Activated naive CD4-positive, alpha-beta T cell treated with anti-CD3 and anti-CD28 coated beads for 36 hours (primary cell): ENCODE measurements at regions of chr10 and their contacts with region 1.

Region 1: GRCh38 chr10:99395750-99396445 is 34.5 kb downstream of the GOT1 start:
- DNase-seq: no peak
- H3K4me3 Mint-ChIP-seq: no peak overlapping the region
- H3K27ac Mint-ChIP-seq: no peak overlapping the region
- H3K4me1 Mint-ChIP-seq: peaks cover 3% of the 10 kb centered on the region
- H3K27me3 Mint-ChIP-seq: no peaks in the 10 kb centered on the region

Region 2: DNA sequence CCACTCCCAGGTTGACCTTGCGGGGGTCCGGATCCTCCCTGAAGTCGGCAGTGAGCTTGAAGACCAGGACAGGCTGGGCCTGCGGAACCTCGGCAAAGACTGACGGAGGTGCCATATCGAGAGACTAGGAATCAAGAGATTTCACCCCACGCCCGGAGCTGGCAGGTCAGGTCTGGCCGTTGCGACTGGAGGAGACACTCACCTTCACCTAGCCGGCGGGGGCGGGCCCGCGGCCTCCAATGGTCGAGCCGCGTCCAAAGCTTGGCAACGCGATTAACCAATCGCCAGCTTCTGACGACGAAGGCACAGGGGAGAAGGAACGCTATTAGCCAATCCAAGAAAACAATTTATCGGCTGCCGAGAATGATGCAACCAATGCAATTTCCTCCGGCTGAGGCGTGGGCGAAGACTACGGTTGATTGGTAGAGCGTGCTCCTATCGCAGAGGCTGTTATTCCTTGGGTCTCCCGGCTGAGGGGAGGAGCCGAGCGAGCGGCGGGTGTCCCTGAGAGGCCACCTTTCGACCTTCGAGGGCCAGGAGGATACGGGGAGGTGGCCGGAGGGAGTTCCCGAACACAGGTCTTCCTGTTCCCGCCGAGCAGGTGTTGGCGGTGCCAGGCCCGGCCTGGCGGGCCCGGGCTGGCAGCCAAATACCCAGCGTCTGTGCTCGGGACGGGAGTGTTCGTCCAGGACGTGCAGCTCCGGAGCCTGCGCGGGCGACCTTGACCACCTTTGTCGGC is 34.7 kb after region 1 on chr10 and contains the start of gene GOT1:
- CTCF ChIA-PET with region 1: interaction called, 11 read pairs
- intact Hi-C with region 1: loop called (anchors 1 kb)
- DNase-seq: peak; percentile 99
- H3K4me3 Mint-ChIP-seq: peak within 1 kb of the TSS; percentile 95
- H3K27ac Mint-ChIP-seq: peak within 1 kb of the TSS; percentile 90
- H3K4me1 Mint-ChIP-seq: peaks cover 38% of the 10 kb centered on the region
- H3K27me3 Mint-ChIP-seq: no peaks in the 10 kb centered on the region
- total RNA-seq, gene GOT1: 62.6 to 67.3 TPM

Region 3: GRCh38 chr10:99435986-99436638 is 40.2 kb after region 1 on chr10:
- CTCF ChIA-PET with region 1: interaction called, 11 read pairs
- intact Hi-C with region 1: no loop called
- DNase-seq: no peak
- H3K4me3 Mint-ChIP-seq: no peak overlapping the region
- H3K27ac Mint-ChIP-seq: no peak overlapping the region
- H3K4me1 Mint-ChIP-seq: peaks cover 21% of the 10 kb centered on the region
- H3K27me3 Mint-ChIP-seq: no peaks in the 10 kb centered on the region

Region 4: DNA sequence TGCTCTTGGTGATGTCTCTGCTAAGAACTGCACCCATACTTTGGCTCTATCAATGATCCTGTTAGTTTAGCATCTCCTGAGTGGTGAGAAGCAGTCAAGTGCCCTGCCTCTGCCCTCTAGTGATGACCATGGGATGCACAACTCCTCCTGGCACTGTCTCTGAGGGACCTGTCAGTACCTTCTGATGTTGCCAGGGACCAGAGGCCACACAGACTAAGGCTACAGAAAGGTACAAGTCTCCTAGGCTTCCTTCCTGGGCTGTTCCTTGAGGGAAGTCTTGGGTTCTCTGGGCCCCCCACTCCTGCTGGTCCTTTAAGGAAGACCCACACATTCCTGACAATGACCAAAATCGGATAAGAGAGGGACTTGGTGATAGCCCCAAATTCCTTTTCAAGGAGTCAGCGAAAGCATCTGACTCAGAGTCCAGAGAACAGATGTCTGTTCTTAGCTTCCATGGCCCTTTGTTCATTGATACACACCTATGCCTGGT is 152.2 kb after region 1 on chr10:
- CTCF ChIA-PET with region 1: interaction called, 5 read pairs
- intact Hi-C with region 1: loop called (anchors 1 kb)
- DNase-seq: peak; percentile 40
- H3K4me3 Mint-ChIP-seq: no peak overlapping the region
- H3K27ac Mint-ChIP-seq: no peak overlapping the region
- H3K4me1 Mint-ChIP-seq: no peaks in the 10 kb centered on the region
- H3K27me3 Mint-ChIP-seq: peaks cover 40% of the 10 kb centered on the region

Region 5: GRCh38 chr10:99560277-99561126 is 164.6 kb after region 1 on chr10:
- CTCF ChIA-PET with region 1: interaction called, 4 read pairs
- intact Hi-C with region 1: loop called (anchors 2 kb)
- DNase-seq: peak; percentile 69
- H3K4me3 Mint-ChIP-seq: no peak overlapping the region
- H3K27ac Mint-ChIP-seq: no peak overlapping the region
- H3K4me1 Mint-ChIP-seq: peaks cover 3% of the 10 kb centered on the region
- H3K27me3 Mint-ChIP-seq: peaks cover 19% of the 10 kb centered on the region

Region 6: DNA sequence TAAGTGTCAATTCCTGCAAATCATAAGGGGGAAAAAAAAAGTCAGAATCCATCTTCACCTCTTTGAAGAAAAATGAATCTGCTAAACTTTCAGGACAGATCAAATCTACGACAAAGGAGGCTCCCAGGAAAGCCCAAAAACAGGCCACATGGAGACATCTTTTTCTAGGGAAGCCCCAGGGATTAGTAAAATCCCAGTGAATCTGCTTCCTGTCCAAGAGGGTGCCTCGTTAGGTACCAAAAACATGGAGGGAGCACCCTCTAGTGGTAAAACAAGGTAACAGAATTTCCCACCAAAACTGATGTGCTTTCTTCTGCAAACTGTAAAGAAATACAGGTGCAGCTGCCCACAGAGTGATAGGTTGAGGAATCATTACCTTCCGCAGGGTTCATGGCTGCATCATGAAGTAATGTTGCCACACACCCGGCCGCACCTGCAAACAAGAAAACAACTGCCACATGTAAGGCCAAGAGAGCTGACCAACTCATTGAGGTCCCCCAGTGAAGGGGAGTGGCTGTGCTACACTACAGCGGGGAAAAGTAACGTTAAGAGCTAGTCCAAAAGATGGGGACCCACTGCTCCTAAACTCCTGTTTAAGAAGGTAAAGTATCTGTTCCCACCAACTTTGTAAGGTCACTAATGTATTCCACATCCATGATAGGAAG is 216.4 kb after region 1 on chr10:
- CTCF ChIA-PET with region 1: interaction called, 3 read pairs
- intact Hi-C with region 1: loop called (anchors 1 kb)
- DNase-seq: peak; percentile 31
- H3K4me3 Mint-ChIP-seq: no peak overlapping the region
- H3K27ac Mint-ChIP-seq: peak overlapping the region; percentile 33
- H3K4me1 Mint-ChIP-seq: peaks cover 30% of the 10 kb centered on the region
- H3K27me3 Mint-ChIP-seq: no peaks in the 10 kb centered on the region

Region 7: GRCh38 chr10:99711129-99711719 is 315.3 kb after region 1 on chr10:
- CTCF ChIA-PET with region 1: no interaction called
- intact Hi-C with region 1: loop called (anchors 1 kb)
- DNase-seq: peak; percentile 66
- H3K4me3 Mint-ChIP-seq: no peak overlapping the region
- H3K27ac Mint-ChIP-seq: no peak overlapping the region
- H3K4me1 Mint-ChIP-seq: peaks cover 13% of the 10 kb centered on the region
- H3K27me3 Mint-ChIP-seq: no peaks in the 10 kb centered on the region